Prostate gland (tissue), 2 donors: ENCODE measurements at regions of chr7 and their contacts with region 1.

Region 1: DNA sequence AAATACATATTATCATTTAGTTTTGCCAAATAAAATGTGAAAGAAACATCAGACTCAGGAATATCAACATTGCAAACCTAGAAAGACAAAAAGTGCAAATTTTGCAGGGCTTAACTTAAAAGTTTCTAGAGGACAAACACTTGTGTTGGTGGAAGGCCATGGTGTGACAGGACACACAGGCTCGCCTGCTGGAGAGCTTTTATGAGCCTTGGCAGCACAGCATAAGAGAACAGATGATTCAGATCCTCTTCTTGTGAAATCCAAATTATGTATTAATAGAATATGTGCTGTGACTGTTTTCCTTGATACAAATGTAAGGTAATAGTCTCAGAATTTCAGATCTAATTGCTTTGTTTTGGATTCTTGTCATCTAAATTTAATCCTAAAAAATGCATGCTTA is 72.9 kb upstream of the ABCB5 start:
- DNase-seq: peak; percentile 72
- H3K4me3 ChIP-seq: no peak overlapping the region
- H3K27ac ChIP-seq: peak overlapping the region in 1 of 2 donors; percentile 1
- H3K4me1 ChIP-seq: no peaks in the 10 kb centered on the region
- H3K27me3 ChIP-seq: no peaks in the 10 kb centered on the region
- CTCF ChIP-seq: no peak
- POLR2A ChIP-seq: no peak

Region 2: DNA sequence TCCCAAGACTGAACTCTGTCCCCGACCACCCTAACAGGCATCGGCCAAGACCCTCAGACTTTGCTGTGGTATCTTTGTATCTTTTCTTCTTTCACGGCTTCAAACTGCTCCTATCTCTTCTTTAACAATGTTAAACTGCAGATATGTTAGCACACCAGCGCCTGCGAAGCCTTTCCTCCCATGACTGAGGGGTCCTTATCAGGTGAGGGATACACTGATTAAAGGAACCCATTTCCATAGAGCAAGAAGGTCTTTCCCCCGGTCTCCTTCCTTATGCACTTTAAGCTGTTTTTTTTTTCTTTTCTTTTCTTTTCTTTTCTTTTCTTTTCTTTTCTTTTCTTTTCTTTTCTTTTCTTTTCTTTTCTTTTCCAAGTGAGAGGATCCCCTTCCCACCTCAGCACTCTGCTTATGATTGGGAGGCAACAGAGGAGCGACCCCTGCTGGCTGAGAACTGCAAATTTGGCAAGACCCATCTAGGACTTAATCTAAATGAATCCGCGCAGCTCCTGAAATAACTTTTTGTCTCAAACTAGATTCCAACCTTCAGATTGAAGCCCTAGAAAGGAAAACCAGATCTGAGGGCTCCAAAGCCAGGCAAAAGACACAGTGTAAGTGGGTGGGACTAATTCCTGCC is 102.0 kb before region 1 on chr7:
- intact Hi-C with region 1: loop called (anchors 10 kb)
- DNase-seq: no peak
- H3K4me3 ChIP-seq: no peak overlapping the region
- H3K27ac ChIP-seq: no peak overlapping the region
- H3K4me1 ChIP-seq: no peaks in the 10 kb centered on the region
- H3K27me3 ChIP-seq: no peaks in the 10 kb centered on the region
- CTCF ChIP-seq: peak in 1 of 4 experiments; percentile 27
- POLR2A ChIP-seq: no peak